PC-3 (cell line): ENCODE measurements at regions of chr5 and their contacts with region 1.

Region 1: GRCh38 chr5:148397968-148398597 is 14.3 kb downstream of the FBXO38 start:
- DNase-seq: peak; percentile 54
- ATAC-seq: peak; percentile 24
- H3K4me3 ChIP-seq: no peak overlapping the region
- H3K27ac ChIP-seq: peak overlapping the region; percentile 18
- H3K4me1 ChIP-seq: peaks cover 59% of the 10 kb centered on the region
- H3K27me3 ChIP-seq: no peaks in the 10 kb centered on the region
- CTCF ChIP-seq: no peak

Region 2: DNA sequence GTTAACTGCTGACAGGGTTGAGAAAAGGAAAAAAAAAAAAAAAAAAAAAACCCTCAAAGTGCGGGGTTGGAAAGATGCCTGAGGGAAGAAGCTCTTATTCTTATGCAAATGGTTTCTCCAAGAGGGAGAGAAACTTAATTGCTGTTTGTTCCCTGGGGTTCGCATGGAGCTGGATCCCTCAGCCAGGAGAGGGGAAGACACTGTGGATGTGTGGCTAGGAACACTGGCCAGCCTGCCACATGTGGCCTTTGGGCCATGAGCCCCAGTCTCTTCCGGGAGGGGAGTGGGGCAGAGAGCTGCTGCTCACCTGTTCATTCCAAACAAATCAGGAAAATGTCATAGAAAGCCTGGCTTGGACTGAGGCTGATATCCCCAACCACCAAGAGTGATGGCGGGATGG is 529.0 kb before region 1 on chr5:
- CTCF ChIA-PET with region 1: no interaction called
- POLR2A ChIA-PET with region 1: no interaction called
- intact Hi-C with region 1: no loop called
- DNase-seq: no peak
- ATAC-seq: no peak; the same call in 1 of the 2 replicates
- H3K4me3 ChIP-seq: no peak overlapping the region
- H3K27ac ChIP-seq: peak overlapping the region; percentile 4; the same call in 1 of the 2 replicates
- H3K4me1 ChIP-seq: peaks cover 5% of the 10 kb centered on the region; the same call in 1 of the 2 replicates
- H3K27me3 ChIP-seq: no peaks in the 10 kb centered on the region
- CTCF ChIP-seq: no peak

Region 3: GRCh38 chr5:148457183-148457620 is 59.1 kb after region 1 on chr5:
- CTCF ChIA-PET with region 1: no interaction called
- POLR2A ChIA-PET with region 1: no interaction called
- intact Hi-C with region 1: loop called (anchors 1 kb)
- DNase-seq: peak; percentile 51
- ATAC-seq: peak; percentile 94
- H3K4me3 ChIP-seq: no peak overlapping the region
- H3K27ac ChIP-seq: no peak overlapping the region
- H3K4me1 ChIP-seq: no peaks in the 10 kb centered on the region
- H3K27me3 ChIP-seq: peaks cover 19% of the 10 kb centered on the region
- CTCF ChIP-seq: peak; percentile 73